ENCODE measurements at regions of chr6 and their contacts with region 1.

Region 1: DNA sequence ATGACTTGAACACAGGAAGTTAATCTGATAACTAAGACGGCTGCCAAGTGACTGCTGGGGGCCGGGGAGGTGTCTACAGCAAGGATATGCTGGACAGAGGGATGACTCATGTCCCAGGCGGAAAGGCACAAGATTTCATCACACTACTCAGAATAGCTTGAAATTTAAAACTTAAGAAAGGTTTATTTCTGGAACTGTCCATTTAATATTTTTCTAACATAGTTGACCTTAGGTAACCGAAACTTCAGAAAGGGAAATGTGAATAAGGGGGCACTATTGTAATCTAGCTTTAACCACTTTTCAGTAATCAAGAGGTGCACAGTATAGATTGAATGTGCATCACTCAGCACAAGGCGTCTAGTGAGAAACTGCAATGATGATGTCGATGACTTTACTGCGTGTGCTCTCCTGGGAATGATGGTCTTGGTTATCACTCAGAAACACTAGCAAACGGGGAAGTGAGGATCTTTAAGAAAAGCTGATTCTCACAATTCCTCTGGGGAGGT is 171.5 kb downstream of the QKI start:
- DNase-seq: peak; percentile 87 to 93
- ATAC-seq: peak; percentile 85 to 88
- H3K4me3 ChIP-seq: peak overlapping the region in 3 of 4 donors; percentile 14 to 24 (median 24)
- H3K27ac ChIP-seq: peak overlapping the region; percentile 81 to 88 (median 86)
- H3K4me1 ChIP-seq: peaks cover 43 to 55% of the 10 kb centered on the region in 2 donors
- H3K27me3 ChIP-seq: no peaks in the 10 kb centered on the region
- CTCF ChIP-seq: no peak
- POLR2A ChIP-seq: peak; percentile 39 to 52

Region 2: DNA sequence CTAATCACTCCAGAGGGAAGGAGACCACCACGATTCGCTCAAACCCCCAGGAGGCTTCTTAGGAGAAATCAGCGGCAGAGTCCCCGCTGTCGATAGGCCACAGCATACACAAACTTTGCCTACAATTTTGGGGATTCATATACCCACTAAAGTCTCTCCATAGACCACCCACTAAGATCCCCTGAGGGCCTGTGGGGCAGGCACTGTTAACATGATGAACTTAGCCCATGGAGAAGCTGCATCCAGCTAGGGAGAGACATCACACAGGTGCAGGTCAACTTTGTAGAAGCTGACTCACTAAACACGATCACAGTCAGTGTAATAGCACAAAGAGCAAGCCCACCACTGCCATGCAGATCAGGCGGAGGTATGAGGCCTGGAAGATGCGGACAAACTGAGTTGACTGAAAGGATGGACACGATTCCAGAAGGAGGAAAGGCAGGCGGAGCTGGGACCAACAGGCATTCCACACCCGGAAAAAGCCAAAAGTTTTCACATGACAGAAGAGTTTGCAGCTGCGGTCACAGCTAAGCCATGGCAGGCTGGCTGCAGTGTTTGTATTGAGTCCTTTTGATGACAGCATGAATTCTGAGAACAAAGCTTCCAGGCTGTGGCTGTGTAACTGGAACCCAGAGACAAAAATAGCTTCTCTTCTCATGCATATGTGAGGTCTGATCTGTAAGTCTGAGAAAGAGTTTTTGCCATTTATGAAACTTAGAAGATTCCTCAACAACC is 247.1 kb before region 1 on chr6:
- in situ Hi-C with region 1: no loop called
- intact Hi-C with region 1: loop called (anchors 5 kb)
- DNase-seq: peak; percentile 73 to 84
- ATAC-seq: peak; percentile 82 to 83
- H3K4me3 ChIP-seq: peak overlapping the region in 3 of 4 donors; percentile 10 to 16 (median 15)
- H3K27ac ChIP-seq: peak overlapping the region; percentile 92 to 99 (median 94)
- H3K4me1 ChIP-seq: peaks cover 65 to 69% of the 10 kb centered on the region in 2 donors
- H3K27me3 ChIP-seq: no peaks in the 10 kb centered on the region
- CTCF ChIP-seq: no peak
- POLR2A ChIP-seq: no peak

Region 3: GRCh38 chr6:163419413-163420288 is 166.3 kb before region 1 on chr6:
- in situ Hi-C with region 1: loop called in 2 of 4 experiments (anchors 10 kb)
- intact Hi-C with region 1: loop called (anchors 2 kb)
- DNase-seq: no peak
- ATAC-seq: peak; percentile 10 to 26
- H3K4me3 ChIP-seq: peak overlapping the region; percentile 71 to 96 (median 87)
- H3K27ac ChIP-seq: peak overlapping the region; percentile 98 to 99 (median 99)
- H3K4me1 ChIP-seq: peaks cover 52 to 58% of the 10 kb centered on the region in 2 donors
- H3K27me3 ChIP-seq: no peaks in the 10 kb centered on the region
- CTCF ChIP-seq: no peak
- POLR2A ChIP-seq: peak in 1 of 2 donors; percentile 16

Region 4: GRCh38 chr6:163427498-163428254 is 158.3 kb before region 1 on chr6:
- in situ Hi-C with region 1: loop called in 3 of 4 experiments (anchors 10 kb)
- intact Hi-C with region 1: no loop called
- DNase-seq: no peak
- ATAC-seq: peak; percentile 62 to 68
- H3K4me3 ChIP-seq: peak overlapping the region in 3 of 4 donors; percentile 13 to 26 (median 17)
- H3K27ac ChIP-seq: peak overlapping the region; percentile 98 to 99 (median 99)
- H3K4me1 ChIP-seq: peaks cover 96 to 100% of the 10 kb centered on the region in 2 donors
- H3K27me3 ChIP-seq: no peaks in the 10 kb centered on the region
- CTCF ChIP-seq: peak in 4 of 5 experiments; percentile 33 to 83 (median 44)
- POLR2A ChIP-seq: no peak

Region 5: DNA sequence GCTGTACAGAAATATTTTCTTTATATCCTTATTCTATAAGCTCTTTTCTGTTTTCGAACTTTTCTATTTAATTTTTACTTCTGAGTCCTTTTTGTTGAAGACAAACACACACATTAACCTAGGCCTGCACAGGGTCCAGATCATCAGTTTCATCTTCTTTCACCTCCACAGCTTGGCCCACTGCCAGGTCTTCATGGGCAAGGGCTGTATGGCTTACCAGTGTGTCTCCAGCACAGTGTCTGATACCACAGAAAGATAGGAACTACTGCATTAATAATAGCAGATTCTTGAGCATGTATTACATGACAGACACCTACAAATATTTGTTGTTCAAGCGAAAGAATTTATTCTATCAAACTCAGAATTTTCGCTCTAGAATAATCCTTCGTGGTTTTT is 147.0 kb before region 1 on chr6:
- in situ Hi-C with region 1: loop called in 1 of 4 experiments (anchors 10 kb)
- intact Hi-C with region 1: no loop called
- DNase-seq: peak in 1 of 2 donors; percentile 32
- ATAC-seq: peak in 1 of 2 donors; percentile 21
- H3K4me3 ChIP-seq: no peak overlapping the region
- H3K27ac ChIP-seq: peak overlapping the region; percentile 3 to 98 (median 52)
- H3K4me1 ChIP-seq: peaks cover 86 to 91% of the 10 kb centered on the region in 2 donors
- H3K27me3 ChIP-seq: no peaks in the 10 kb centered on the region
- CTCF ChIP-seq: no peak
- POLR2A ChIP-seq: no peak

Region 6: DNA sequence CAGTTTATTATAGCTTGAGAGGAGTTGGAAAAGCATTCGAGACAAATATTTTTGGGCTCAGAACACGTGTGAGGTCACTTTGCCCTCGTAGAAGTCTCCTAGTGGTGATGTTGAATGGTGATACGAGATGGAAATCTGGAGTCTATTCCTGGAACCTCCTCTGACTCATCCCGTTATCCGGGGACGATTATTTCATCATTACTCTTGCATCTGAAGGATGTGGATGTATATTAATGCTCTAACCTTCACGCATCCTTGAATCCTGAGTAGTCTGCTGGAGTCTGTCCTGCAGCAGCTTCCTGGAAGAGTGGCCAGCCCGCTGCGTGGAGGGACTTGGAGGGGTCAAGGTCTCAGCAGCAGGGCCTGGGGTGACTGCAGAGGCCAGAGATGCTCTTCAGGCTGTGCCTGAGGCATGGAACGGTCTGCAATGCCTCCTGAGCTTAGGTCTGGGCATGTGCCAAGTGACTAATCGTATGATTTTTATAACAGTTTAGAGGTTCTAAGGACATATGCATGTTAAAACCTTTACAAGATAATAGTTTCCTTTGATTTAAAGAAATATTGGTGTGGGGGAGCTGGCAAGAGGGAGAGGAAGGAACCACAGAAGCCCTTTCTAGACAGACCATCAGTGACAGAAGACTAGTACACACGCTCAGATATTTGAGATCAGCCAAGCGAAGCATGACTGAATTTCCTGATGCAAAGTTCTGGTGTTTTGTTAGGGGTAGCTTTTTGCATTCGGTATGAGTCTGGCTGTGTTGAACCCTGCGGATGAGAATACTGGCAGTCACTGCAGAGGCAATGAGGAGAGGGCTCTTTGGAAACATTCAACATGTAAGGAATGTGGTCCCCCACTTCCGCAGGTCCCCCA is 228.7 kb after region 1 on chr6:
- in situ Hi-C with region 1: no loop called
- intact Hi-C with region 1: loop called (anchors 5 kb)
- DNase-seq: peak; percentile 22 to 48
- ATAC-seq: peak; percentile 97 to 99
- H3K4me3 ChIP-seq: no peak overlapping the region
- H3K27ac ChIP-seq: peak overlapping the region; percentile 76 to 87 (median 84)
- H3K4me1 ChIP-seq: peaks cover 19 to 20% of the 10 kb centered on the region in 2 donors
- H3K27me3 ChIP-seq: no peaks in the 10 kb centered on the region
- CTCF ChIP-seq: peak; percentile 40 to 55 (median 48)
- POLR2A ChIP-seq: no peak